Prostate gland (tissue), 2 donors: ENCODE measurements at regions of chr2 and their contacts with region 1.

Region 1: GRCh38 chr2:200811336-200812121 is at the start of gene BZW1:
- DNase-seq: peak; percentile 95
- H3K4me3 ChIP-seq: peak within 1 kb of the TSS; percentile 88 to 96
- H3K27ac ChIP-seq: peak within 1 kb of the TSS; percentile 97 to 98
- H3K4me1 ChIP-seq: peaks cover 8% of the 10 kb centered on the region
- H3K27me3 ChIP-seq: no peaks in the 10 kb centered on the region
- CTCF ChIP-seq: peak in 1 of 4 experiments; percentile 29
- POLR2A ChIP-seq: peak; percentile 94
- total RNA-seq, gene BZW1: 219 to 232 TPM

Region 2: DNA sequence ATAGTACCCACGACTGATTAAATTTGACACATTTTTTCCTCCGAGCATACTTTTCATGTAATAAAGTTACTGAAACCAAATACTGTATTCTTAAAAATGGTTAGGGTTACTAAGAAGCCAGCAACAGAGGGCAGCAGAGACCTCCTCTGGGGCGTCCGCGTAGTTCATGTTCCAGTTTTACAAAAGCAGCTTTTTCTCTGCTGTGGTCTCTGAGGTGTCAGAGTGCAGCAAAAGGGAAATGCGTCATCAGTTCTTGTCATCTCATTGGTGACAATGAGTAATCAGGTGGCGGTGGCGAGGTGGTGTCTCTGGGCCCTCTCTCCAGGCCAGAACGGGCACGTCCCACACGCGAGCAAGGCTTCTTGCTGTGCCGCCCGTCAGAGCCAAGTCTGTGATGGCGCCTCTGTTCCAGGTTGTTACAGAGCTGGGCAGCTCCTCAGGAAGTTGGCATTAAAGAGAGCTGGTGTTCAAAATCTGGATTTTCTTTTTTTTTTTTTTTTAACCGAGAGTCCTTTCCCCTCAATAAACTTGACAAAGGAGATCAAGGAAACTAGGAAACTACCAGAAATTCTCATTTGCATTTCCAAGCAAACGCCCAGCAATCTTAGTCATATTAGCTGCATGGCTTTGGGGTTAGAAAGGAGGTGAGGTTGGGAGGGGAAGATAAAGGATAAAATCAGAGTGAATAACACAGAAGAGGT is 98.4 kb before region 1 on chr2:
- intact Hi-C with region 1: loop called (anchors 1 kb)
- DNase-seq: peak; percentile 77
- H3K4me3 ChIP-seq: peak overlapping the region; percentile 12 to 24
- H3K27ac ChIP-seq: peak overlapping the region; percentile 34 to 64
- H3K4me1 ChIP-seq: no peaks in the 10 kb centered on the region
- H3K27me3 ChIP-seq: no peaks in the 10 kb centered on the region
- CTCF ChIP-seq: peak; percentile 52 to 89 (median 80)
- POLR2A ChIP-seq: peak; percentile 65

Region 3: DNA sequence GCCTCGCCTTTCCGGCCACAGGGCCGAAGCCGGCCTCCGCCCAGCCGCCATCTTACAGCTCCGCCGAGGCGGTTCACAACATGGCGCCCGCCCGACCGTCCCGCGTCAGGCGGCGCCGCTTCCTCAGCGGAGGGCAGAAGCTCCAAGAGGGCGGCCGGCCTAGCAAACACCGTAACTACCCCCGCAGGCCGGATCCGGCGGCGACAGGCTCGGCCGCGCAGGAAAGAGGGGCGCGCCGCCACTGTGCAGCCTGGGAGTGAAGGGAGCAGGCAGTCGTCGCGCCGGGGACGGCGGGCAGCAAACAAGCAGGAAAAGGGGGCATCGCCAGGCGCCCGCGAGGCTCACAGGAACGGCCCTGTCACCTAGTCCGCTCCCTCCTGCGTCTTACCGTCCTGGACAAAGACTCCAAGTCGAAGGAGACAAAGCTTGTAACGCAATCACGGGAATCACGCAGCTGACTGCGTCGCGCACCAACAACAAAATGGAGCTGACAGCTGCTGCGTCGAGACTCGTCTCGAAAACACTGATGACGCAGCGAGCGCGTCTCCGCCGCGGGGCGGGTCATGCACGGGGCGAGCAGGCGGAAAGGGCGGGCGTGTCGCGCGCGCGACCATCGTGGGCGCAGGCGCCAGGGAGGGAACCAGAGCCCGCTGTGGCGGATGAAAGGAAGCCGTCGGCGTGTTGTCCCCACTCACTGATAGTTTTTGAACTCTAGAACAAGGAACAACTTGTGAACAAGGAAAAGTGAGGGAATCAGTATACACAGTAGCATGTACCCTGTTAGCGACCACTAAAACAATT is 52.8 kb after region 1 on chr2 and contains the start of gene CLK1:
- intact Hi-C with region 1: loop called (anchors 2 kb)
- DNase-seq: peak; percentile 95
- H3K4me3 ChIP-seq: peak within 1 kb of the TSS; percentile 87 to 90
- H3K27ac ChIP-seq: peak within 1 kb of the TSS; percentile 100
- H3K4me1 ChIP-seq: peaks cover 4% of the 10 kb centered on the region
- H3K27me3 ChIP-seq: no peaks in the 10 kb centered on the region
- CTCF ChIP-seq: peak in 1 of 4 experiments; percentile 5
- POLR2A ChIP-seq: peak; percentile 99
- total RNA-seq, gene CLK1: 126 to 131 TPM